HAP-1 (cell line): ENCODE measurements at regions of chr16 and their contacts with region 1.

Region 1: DNA sequence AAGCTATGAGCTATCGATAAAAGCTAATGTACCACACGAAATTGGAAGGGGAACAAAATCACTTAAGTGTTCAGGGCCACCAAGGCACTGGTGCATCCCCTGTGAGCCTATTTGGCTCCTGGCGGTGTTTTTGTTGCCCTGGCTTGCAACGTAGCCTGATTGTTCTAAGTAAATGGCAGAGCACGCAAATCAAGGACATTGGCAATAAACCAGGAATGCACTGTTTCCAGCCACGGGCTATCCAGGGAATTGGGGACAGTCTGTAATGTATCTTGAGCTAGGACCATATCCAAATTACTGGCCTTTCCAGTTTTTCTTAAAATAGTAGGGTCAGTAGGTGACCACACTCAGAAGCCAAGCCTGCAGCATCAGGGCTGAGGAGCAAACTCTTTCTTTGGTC is 734.0 kb downstream of the MAF start:
- DNase-seq: no peak
- H3K4me3 ChIP-seq: no peak overlapping the region
- H3K4me1 ChIP-seq: no peaks in the 10 kb centered on the region
- H3K27me3 ChIP-seq: no peaks in the 10 kb centered on the region

Region 2: GRCh38 chr16:78962457-78962929 is 96.0 kb after region 1 on chr16:
- in situ Hi-C with region 1: loop called (anchors 25 kb)
- DNase-seq: no peak
- H3K4me3 ChIP-seq: no peak overlapping the region
- H3K4me1 ChIP-seq: no peaks in the 10 kb centered on the region
- H3K27me3 ChIP-seq: no peaks in the 10 kb centered on the region